ENCODE measurements at regions of chr12 and their contacts with region 1.

Region 1: DNA sequence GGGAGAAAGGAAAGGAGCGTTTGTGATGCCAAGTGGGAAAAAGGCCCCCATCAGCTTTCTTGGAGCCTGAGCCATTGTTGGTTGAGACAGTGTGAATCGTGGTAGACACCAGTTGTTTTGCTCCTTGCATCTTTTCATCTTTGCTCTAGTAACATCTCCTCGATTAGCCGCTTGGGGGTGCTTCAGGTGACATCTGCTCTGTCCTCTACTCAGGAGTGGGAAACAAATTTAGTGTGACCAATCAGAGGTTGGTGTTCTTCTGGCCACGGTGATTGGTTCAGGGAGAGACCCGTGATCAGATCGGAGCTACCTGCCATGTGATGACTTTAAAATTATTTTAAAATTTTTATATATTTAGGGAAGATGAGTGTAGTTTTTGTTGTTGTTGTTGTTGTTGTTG is 66.2 kb upstream of the RPH3A start:
- DNase-seq: no peak
- ATAC-seq: no peak
- H3K4me3 ChIP-seq: no peak overlapping the region
- H3K27ac ChIP-seq: no peak overlapping the region
- H3K4me1 ChIP-seq: no peaks in the 10 kb centered on the region
- H3K27me3 ChIP-seq: peaks cover 7% of the 10 kb centered on the region; the same call in 1 of the 2 replicates
- CTCF ChIP-seq: no peak

Region 2: DNA sequence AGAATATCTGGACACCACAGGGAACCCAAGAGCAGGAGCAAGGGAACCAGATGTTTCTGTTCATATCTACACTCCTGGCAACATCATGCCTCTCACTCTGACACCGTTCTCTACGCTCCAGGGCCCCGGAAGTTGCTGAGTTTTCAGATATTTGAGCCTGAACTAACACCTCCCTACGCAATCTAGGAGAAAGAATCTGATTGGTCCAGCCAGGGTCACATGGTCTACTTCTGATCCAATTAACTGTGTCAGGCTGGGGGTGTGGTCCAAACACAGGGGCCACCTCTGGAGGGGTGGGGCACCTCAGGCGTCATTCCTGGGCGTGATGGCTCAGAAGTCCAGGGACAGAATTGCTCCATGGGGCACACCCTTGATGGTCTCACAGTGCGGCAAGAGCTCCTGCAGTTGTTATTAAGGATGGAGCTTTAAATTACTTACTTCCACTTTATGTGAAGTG is 141.1 kb before region 1 on chr12:
- CTCF ChIA-PET with region 1: no interaction called
- POLR2A ChIA-PET with region 1: interaction called, 13 read pairs
- in situ Hi-C with region 1: no loop called
- intact Hi-C with region 1: no loop called
- DNase-seq: no peak
- ATAC-seq: no peak
- H3K4me3 ChIP-seq: no peak overlapping the region
- H3K27ac ChIP-seq: no peak overlapping the region
- H3K4me1 ChIP-seq: no peaks in the 10 kb centered on the region
- H3K27me3 ChIP-seq: peaks cover 4% of the 10 kb centered on the region
- CTCF ChIP-seq: no peak

Region 3: DNA sequence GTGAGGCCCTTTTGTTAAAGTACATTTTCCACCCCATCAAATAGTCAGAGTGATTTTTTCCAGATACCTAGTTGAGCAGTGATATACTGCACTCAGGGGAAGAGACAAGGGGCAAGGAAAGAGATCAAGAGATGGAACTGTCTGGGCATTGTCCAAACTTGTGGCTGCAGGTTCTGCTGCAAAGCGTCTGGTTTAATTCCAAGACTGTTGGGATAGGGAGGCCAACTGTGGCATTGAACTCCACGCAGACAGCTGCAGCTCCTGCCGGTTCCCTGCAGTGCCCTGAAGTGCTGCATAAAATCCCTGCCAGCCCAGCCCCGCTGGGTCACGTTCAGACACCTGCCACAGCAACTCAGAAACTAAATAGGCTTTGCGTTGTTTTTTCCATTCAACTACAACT is 96.7 kb after region 1 on chr12:
- CTCF ChIA-PET with region 1: no interaction called
- POLR2A ChIA-PET with region 1: no interaction called
- in situ Hi-C with region 1: no loop called
- intact Hi-C with region 1: no loop called
- DNase-seq: no peak
- ATAC-seq: no peak
- H3K4me3 ChIP-seq: no peak overlapping the region
- H3K27ac ChIP-seq: no peak overlapping the region
- H3K4me1 ChIP-seq: no peaks in the 10 kb centered on the region
- H3K27me3 ChIP-seq: no peaks in the 10 kb centered on the region
- CTCF ChIP-seq: no peak